Lower leg skin (tissue), 4 donors: ENCODE measurements at regions of chr21 and their contacts with region 1.

Region 1: DNA sequence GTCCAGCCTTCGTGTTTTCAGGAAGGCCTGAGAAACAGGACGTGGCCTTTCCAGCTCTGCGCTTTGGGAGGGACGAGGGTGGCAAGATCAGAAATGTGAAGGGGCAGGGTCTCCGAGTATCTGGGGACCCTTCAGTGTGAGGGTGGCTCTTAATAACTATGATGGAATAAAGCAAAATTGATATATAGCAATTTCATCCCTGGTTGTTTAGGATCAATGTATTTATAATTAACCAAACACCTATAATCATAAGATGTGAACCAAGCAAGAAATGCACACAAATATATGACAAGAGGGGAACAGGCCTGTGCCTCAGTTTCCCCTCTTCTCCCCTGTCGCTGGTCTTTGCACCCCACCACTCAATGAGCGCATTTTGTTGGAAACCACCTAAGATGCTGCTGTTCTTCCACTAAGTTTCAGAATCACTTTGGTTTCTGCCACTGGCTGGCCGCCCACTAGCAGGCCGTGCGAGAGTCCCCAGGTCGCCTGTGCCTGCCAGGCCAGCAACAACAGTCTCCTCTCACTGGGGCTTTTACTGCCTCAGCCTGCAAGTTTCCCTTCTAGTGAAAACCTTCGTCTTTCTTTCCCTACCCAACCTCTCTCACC is 36.6 kb downstream of the UBASH3A start:
- DNase-seq: no peak
- H3K4me3 ChIP-seq: no peak overlapping the region
- CTCF ChIP-seq: no peak
- POLR2A ChIP-seq: no peak

Region 2: DNA sequence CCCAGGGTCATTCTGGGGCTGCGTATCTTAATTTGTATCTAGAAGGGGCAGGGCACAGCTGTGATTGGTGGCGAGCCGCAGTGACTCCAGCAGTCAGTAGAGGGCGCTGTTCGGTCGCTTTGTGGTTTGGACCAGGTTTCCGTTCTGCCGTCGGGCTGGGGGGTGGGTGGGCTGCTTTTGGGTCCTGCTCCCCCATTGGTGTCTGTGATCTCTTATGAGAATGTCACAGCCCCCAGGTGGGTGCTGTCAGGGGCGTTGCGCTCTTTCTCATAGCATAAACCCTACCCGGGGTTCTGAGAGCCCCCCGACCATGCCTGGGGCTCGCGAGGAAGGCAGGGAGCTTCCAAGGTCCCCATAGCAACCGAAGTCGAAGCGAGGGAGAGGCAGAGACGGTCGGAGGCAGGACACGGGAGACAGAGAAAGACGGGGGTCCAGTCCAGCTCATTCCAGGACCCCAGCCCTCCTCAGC is 130.5 kb before region 1 on chr21:
- intact Hi-C with region 1: loop called (anchors 10 kb)
- DNase-seq: peak in 1 of 2 donors; percentile 93
- H3K4me3 ChIP-seq: no peak overlapping the region
- CTCF ChIP-seq: no peak
- POLR2A ChIP-seq: no peak

Region 3: DNA sequence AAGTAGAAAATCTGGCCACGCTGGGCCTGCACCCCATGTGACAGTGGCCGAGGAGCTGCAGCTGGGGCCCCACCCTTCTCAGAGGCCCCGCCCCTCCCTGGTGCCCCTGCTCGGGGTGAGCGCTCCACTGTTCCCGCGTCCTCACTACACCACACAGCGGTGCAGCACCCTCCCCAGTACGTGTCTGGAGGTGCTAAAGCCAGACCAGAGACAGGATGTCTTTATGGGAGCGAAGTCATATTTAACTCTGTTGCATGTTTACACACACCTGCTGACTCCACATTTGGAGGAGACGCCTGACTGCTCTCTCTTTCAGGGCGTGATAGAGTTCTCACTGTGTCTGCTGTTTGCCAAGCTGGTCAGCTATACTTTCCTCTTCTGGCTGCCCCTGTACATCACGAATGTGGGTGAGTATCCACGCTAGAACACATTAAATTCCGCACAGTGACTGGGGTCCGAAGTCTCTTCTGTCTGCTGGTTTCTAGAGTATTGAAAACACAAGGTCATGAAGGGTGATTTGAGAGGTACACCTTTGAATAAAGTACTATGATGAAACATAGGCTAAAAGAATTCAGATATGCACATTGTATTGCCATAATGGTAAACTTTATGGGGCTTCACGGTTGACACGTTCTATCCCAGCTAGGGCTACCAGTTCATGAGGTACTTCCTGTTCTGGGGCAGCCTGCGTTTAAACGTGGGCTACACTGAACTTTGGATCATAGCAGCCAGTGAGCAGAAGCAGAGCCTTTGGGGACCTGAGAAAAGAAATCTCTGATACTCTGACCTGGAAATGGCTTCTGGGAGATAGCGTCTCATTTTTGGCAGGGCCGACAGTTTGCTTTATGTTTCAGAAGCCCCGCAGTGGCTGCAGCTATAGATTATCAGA is 121.7 kb after region 1 on chr21:
- intact Hi-C with region 1: no loop called
- DNase-seq: peak in 1 of 2 donors; percentile 72
- H3K4me3 ChIP-seq: no peak overlapping the region
- CTCF ChIP-seq: no peak
- POLR2A ChIP-seq: no peak